Left cardiac atrium (tissue), 4 donors: ENCODE measurements at regions of chr19 and their contacts with region 1.

Region 1: DNA sequence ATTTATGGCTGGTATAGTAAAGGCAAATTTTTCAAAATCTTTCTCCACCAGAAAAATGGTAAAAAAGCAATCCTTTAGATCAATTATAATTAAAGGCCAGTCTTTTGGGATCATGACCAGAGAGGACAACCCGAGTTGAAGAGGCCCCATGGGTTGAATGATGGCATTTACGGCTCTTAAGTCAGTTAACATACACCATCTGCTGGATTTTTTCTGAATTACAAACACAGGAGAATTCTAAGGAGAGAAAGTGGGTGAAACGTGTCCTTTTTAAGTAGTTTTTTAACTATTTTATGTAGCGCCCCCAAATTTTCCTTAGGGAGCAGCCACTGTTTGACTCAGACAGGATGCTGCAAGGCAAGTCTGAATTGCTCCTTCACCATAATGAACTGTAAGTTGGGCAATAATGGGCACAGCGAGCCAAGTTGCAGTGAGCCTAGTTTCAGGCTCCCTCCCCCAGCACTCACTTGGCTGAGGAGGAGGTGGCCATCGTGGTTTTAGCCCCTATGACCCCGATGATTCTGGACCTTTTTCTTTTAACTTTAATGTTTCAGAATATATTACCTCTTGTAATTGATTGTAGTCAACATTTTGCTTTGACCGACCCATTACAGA is 13.6 kb upstream of the ZNF611 start:
- DNase-seq: peak; percentile 41
- ATAC-seq: peak; percentile 55 to 59

Region 2: GRCh38 chr19:52248241-52248640 is 500.2 kb before region 1 on chr19:
- intact Hi-C with region 1: loop called (anchors 5 to 10 kb)
- DNase-seq: peak; percentile 60
- ATAC-seq: peak in 1 of 2 donors; percentile 74

Region 3: GRCh38 chr19:52258426-52258825 is 490.0 kb before region 1 on chr19:
- intact Hi-C with region 1: loop called in 1 of 2 experiments (anchors 10 kb)
- DNase-seq: no peak
- ATAC-seq: no peak

Region 4: GRCh38 chr19:52786457-52787359 is 38.3 kb after region 1 on chr19 and contains the start of gene ZNF600:
- intact Hi-C with region 1: no loop called
- DNase-seq: peak; percentile 92
- ATAC-seq: peak; percentile 99 to 100
- total RNA-seq, gene ZNF600: 3.9 to 4.4 TPM